ENCODE measurements at regions of chr17 and their contacts with region 1.

Region 1: DNA sequence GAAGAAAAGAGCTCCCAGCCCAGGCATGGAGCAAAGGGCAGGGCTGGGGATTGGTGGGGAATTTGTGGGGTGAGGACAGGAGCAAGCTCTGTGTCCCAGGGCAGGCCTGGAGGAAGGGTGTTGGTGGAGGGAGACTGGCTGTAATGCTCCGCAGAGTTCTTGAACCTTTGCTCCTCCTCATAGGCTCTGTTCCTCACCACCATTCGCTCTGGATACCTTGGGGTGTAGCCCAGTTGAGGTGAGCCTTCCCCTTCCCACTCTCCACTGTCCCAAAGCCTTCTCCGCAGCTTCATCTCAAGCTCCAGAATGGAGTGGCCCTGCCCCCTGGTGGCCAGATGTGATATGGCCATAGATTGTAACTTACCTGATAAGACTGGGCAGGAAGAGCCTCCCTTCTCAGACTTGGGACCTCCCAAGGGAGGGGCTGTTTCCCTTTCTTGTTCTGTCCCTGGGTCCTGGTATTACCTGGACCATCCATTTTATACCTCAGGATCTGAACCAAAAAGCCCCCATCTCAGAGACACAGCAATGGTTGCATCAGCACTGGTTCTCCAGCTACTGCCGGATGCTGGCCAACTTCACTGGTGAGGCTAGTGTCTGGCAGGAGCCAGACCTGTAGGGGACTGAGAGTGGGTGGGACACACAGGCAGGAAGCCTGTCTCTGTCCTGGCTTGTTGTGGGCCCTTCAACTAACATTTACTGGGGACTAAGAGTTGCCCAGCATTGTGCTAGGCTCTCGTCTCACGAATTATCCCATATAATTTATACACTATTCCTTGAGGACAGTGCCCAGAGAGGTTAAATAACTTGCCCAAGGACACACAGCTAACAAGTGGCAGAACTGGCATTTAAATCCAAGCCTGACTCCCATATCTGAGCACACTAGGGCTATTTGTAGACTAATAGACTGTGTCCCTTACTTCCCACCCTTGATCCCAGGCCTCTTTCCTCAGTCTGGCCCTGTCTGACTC is 19.1 kb upstream of the STAC2 start:
- DNase-seq: peak; percentile 80 to 96 (median 90)
- H3K4me3 ChIP-seq: no peak overlapping the region
- H3K27ac ChIP-seq: no peak overlapping the region
- H3K4me1 ChIP-seq: no peaks in the 10 kb centered on the region
- H3K27me3 ChIP-seq: no peaks in the 10 kb centered on the region
- CTCF ChIP-seq: peak; percentile 87 to 98 (median 93)
- POLR2A ChIP-seq: no peak

Region 2: GRCh38 chr17:39209317-39210092 is 35.4 kb before region 1 on chr17:
- intact Hi-C with region 1: loop called (anchors 5 kb)
- DNase-seq: peak; percentile 73 to 88 (median 79)
- H3K4me3 ChIP-seq: peak overlapping the region in 1 of 4 donors; percentile 43
- H3K27ac ChIP-seq: peak overlapping the region in 2 of 5 donors; percentile 49 to 72
- H3K4me1 ChIP-seq: peaks cover 8 to 22% of the 10 kb centered on the region in 2 donors
- H3K27me3 ChIP-seq: no peaks in the 10 kb centered on the region
- CTCF ChIP-seq: no peak
- POLR2A ChIP-seq: no peak

Region 3: DNA sequence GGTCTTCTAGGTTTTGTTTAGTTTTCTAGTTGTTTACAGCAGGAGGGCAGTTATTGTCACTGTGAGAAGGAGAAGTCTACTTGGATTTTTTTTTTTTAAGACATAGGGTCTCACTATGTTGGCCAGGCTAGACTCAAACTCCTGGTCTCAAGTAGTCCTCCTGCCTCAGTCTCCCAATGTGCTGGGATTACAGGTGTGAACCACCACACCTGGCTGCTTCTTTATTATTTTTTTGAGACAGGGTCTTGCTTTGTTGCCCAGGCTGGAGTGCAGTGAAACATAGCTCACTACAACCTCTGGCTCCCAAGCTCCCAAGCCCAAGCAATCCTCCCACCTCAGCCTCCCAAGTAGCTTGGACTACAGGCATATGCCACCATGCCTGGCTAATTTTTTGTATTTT is 49.2 kb after region 1 on chr17:
- intact Hi-C with region 1: no loop called
- DNase-seq: no peak
- H3K4me3 ChIP-seq: no peak overlapping the region
- H3K27ac ChIP-seq: no peak overlapping the region
- H3K4me1 ChIP-seq: no peaks in the 10 kb centered on the region
- H3K27me3 ChIP-seq: no peaks in the 10 kb centered on the region
- CTCF ChIP-seq: no peak
- POLR2A ChIP-seq: no peak